WTC11 (cell line): ENCODE measurements at regions of chr14 and their contacts with region 1.

Region 1: DNA sequence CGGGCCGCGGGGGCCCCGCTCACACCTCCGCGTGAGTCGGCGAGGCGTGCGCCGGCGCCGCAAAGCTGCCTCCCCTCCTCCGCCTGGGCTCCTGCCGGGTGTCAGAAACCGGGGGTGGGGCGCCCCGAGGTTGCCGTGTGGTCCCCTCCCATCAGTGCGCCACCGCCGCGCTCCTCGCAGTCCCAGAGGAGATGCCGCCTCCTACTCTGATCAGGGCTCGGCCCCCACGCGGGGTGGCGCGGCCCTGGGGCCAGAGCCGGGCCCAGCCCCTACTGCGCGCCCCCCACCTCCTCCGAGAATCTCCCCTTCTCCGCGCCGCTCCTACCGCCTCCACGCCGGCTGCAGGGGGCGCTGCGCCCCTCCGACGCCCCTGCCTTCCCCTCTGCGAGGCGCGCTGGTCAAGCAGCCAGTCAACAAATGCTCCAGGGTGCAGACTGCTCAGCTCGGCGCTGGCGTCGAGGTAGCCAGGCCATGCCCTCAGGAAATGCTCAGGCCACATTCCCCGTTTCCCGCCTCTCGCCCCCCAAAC is 467 bp upstream of the JAG2 start:
- DNase-seq: peak; percentile 76
- ATAC-seq: peak; percentile 68
- H3K4me3 Mint-ChIP-seq: peak overlapping the region; percentile 63
- H3K27ac Mint-ChIP-seq: no peak overlapping the region
- H3K4me1 Mint-ChIP-seq: no peaks in the 10 kb centered on the region
- H3K27me3 Mint-ChIP-seq: peaks cover 15% of the 10 kb centered on the region
- CTCF ChIP-seq: peak; percentile 73

Region 2: GRCh38 chr14:105154476-105154871 is 14.6 kb before region 1 on chr14:
- CTCF ChIA-PET with region 1: interaction called, 20 read pairs
- POLR2A ChIA-PET with region 1: no interaction called
- DNase-seq: no peak
- ATAC-seq: no peak
- H3K4me3 Mint-ChIP-seq: no peak overlapping the region
- H3K27ac Mint-ChIP-seq: no peak overlapping the region
- H3K4me1 Mint-ChIP-seq: no peaks in the 10 kb centered on the region
- H3K27me3 Mint-ChIP-seq: no peaks in the 10 kb centered on the region
- CTCF ChIP-seq: no peak

Region 3: GRCh38 chr14:105180592-105181548 is 11.8 kb after region 1 on chr14 and contains the start of gene NUDT14:
- CTCF ChIA-PET with region 1: interaction called, 107 read pairs
- POLR2A ChIA-PET with region 1: no interaction called
- DNase-seq: peak; percentile 78
- ATAC-seq: peak; percentile 66
- H3K4me3 Mint-ChIP-seq: peak within 1 kb of the TSS; percentile 71
- H3K27ac Mint-ChIP-seq: no peak within 1 kb of the TSS
- H3K4me1 Mint-ChIP-seq: peaks cover 3% of the 10 kb centered on the region; the same call in 1 of the 2 replicates
- H3K27me3 Mint-ChIP-seq: peaks cover 24% of the 10 kb centered on the region
- CTCF ChIP-seq: no peak
- total RNA-seq, gene NUDT14: 35.4 to 56.2 TPM (median 51.3 TPM) in 3 replicates

Region 4: GRCh38 chr14:105197271-105197670 is 28.2 kb after region 1 on chr14:
- CTCF ChIA-PET with region 1: interaction called, 33 read pairs
- POLR2A ChIA-PET with region 1: no interaction called
- DNase-seq: no peak
- ATAC-seq: no peak
- H3K4me3 Mint-ChIP-seq: no peak overlapping the region
- H3K27ac Mint-ChIP-seq: no peak overlapping the region
- H3K4me1 Mint-ChIP-seq: peaks cover 9% of the 10 kb centered on the region
- H3K27me3 Mint-ChIP-seq: peaks cover 24% of the 10 kb centered on the region
- CTCF ChIP-seq: no peak

Region 5: GRCh38 chr14:105203057-105203531 is 34.1 kb after region 1 on chr14:
- CTCF ChIA-PET with region 1: interaction called, 33 read pairs
- POLR2A ChIA-PET with region 1: no interaction called
- DNase-seq: peak; percentile 86
- ATAC-seq: peak; percentile 60
- H3K4me3 Mint-ChIP-seq: no peak overlapping the region
- H3K27ac Mint-ChIP-seq: no peak overlapping the region
- H3K4me1 Mint-ChIP-seq: no peaks in the 10 kb centered on the region
- H3K27me3 Mint-ChIP-seq: peaks cover 11% of the 10 kb centered on the region
- CTCF ChIP-seq: peak; percentile 95

Region 6: GRCh38 chr14:105248368-105248756 is 79.3 kb after region 1 on chr14 and contains the start of gene BTBD6:
- CTCF ChIA-PET with region 1: interaction called, 11 read pairs
- POLR2A ChIA-PET with region 1: no interaction called
- DNase-seq: peak; percentile 73
- ATAC-seq: peak; percentile 80
- H3K4me3 Mint-ChIP-seq: peak within 1 kb of the TSS; percentile 75
- H3K27ac Mint-ChIP-seq: peak within 1 kb of the TSS; percentile 72; the same call in 1 of the 2 replicates
- H3K4me1 Mint-ChIP-seq: peaks cover 5% of the 10 kb centered on the region
- H3K27me3 Mint-ChIP-seq: no peaks in the 10 kb centered on the region; the same call in 1 of the 2 replicates
- CTCF ChIP-seq: no peak
- total RNA-seq, gene BTBD6: 7.8 to 10.0 TPM (median 8.3 TPM) in 3 replicates